Activated CD4-positive, alpha-beta T cell treated with anti-CD3 and anti-CD28 coated beads for 36 hours (primary cell): ENCODE measurements at regions of chr1 and their contacts with region 1.

Region 1: GRCh38 chr1:234486498-234487448 is 7.8 kb upstream of the TARBP1 start:
- DNase-seq: peak; percentile 61
- ATAC-seq: peak; percentile 16
- H3K4me3 Mint-ChIP-seq: no peak overlapping the region
- H3K27ac Mint-ChIP-seq: peak overlapping the region; percentile 98
- H3K4me1 Mint-ChIP-seq: peaks cover 43% of the 10 kb centered on the region
- H3K27me3 Mint-ChIP-seq: peaks cover 16% of the 10 kb centered on the region

Region 2: DNA sequence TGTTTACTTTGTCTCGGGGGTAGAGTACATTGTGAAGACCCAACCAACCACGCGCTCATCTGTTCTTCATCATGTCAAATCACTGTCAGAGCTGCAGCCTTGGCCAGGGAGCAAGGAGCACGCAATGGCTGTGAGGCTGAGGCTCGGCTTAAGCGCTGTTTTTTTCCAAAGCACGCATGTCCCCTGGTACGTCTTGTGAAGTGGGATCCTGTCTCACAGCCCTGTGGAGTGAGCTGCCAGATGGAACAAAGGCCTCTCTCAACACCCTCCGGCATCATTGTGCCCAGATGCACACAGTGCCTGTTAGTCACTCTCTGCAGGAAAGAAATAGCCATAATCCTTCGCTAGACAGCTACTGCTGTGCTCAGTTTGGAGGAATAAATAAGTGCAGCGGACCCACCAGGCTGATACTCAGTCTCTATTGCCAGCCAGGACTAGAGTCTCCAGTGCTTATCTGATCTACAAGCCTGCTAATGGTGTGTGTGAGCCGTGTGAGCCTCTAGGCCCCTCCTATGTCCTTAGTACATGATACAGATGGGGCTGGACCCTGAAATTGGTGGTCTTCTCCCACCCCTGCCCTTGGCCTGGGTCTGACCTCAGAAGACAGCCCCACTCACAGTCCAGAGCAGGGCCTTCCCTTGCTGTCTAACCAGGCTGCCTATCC is 204.8 kb before region 1 on chr1:
- CTCF ChIA-PET with region 1: no interaction called
- POLR2A ChIA-PET with region 1: no interaction called
- intact Hi-C with region 1: no loop called
- DNase-seq: no peak
- ATAC-seq: no peak
- H3K4me3 Mint-ChIP-seq: no peak overlapping the region
- H3K27ac Mint-ChIP-seq: no peak overlapping the region
- H3K4me1 Mint-ChIP-seq: no peaks in the 10 kb centered on the region
- H3K27me3 Mint-ChIP-seq: peaks cover 5% of the 10 kb centered on the region

Region 3: DNA sequence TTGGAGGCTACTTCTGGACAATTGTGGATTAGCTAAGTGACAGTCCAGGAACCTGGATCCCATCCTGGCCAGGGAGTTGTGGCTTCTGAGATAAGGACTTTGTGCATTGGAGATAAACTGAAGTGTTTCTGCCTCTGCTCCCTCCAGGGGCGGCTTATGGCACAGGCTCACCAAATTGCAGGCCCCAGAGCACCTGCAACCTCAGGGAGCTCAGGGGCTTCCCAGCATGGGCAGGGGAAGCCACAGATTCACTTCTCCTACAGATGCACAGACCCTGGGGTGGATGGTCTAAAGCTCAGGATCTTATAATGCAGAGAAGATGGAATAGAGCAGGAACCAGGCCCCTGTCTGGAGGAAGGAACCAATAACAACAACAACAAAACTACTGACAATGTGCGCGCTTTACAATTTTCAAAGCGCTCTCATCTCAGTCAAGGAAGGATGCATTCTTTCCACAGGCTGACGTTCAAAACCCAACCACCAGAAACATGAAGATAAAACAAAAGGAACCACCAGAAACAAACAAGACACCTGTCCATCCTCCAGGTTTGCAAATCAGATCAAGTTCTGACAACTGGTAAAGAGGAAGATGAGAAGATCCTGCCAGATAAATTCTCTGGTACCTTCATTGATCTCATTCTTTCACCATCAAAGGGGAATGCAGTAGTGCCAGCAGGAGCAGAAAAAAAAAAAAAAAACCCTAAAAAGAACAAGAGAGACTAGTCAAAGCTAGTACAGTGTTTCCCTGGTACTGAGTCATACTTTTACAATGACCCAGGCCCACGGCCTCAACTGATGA is 244.2 kb after region 1 on chr1:
- CTCF ChIA-PET with region 1: no interaction called
- POLR2A ChIA-PET with region 1: no interaction called
- intact Hi-C with region 1: loop called (anchors 1 to 5 kb)
- DNase-seq: peak; percentile 77
- ATAC-seq: peak; percentile 87
- H3K4me3 Mint-ChIP-seq: peak overlapping the region; percentile 32
- H3K27ac Mint-ChIP-seq: peak overlapping the region; percentile 92
- H3K4me1 Mint-ChIP-seq: peaks cover 71% of the 10 kb centered on the region
- H3K27me3 Mint-ChIP-seq: no peaks in the 10 kb centered on the region